ENCODE measurements at regions of chr2 and their contacts with region 1.

Region 1: DNA sequence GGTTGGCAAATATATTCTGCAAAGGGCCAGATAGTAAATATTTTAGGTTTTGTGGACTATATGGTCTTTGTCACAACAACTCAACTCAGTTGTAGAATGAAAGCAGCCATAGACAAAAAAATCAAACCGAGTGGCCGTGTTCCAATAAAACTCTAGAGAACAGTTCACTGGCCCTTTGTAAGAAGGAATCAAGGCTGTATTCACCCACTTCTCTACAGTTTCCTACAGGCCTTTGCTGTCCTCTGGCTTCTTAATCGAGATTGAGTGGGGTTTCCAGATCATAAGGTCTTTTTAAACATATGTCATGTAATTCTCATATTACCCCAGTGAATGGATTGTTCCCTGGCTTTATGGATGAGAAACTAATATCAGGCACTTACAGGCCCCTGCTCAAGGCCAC is 448.9 kb upstream of the ETAA1 start:
- DNase-seq: no peak
- ATAC-seq: no peak
- H3K4me3 ChIP-seq: no peak overlapping the region
- H3K27ac ChIP-seq: no peak overlapping the region
- H3K4me1 ChIP-seq: no peaks in the 10 kb centered on the region
- H3K27me3 ChIP-seq: peaks cover 0 to 2% (median 0%) of the 10 kb centered on the region in 3 donors
- CTCF ChIP-seq: no peak

Region 2: GRCh38 chr2:66984864-66985263 is 36.6 kb after region 1 on chr2:
- intact Hi-C with region 1: loop called in 1 of 2 experiments (anchors 1 kb)
- DNase-seq: no peak
- ATAC-seq: no peak
- H3K4me3 ChIP-seq: no peak overlapping the region
- H3K27ac ChIP-seq: no peak overlapping the region
- H3K4me1 ChIP-seq: no peaks in the 10 kb centered on the region
- H3K27me3 ChIP-seq: no peaks in the 10 kb centered on the region
- CTCF ChIP-seq: no peak

Measured in psoas muscle (tissue), 8 donors.